Common myeloid progenitor, CD34-positive (primary cell): ENCODE measurements at regions of chr1 and their contacts with region 1.

Region 1: DNA sequence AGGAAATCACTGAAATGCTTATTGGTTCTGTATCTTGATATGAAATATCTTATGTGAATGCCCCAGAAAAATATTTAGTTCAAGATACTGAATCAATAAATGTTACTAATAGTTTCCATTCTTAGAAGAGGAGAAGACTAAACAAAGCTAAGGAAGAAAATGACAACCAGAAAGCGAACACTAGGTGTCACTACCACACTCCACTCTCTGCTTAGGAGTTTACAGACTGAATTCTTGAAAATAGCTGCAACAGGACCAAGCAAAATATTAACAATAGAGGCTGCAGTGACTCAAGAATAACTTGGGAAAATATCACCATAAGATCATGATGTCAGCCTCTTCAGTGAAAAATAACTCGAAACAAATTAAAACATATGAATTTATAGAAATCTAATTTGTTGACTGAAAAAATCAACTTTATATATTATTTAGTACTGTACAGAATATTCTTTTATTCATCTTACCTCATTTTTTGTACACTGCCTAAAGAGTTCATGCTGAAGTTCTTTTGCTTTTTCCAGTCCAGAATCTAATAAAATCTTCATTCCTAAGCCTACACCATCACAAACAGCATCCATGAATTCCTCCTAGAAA is 61.6 kb downstream of the KIF14 start:
- DNase-seq: peak; percentile 44 to 75 (median 64)
- H3K4me3 ChIP-seq: no peak overlapping the region
- H3K27ac ChIP-seq: no peak overlapping the region
- H3K4me1 ChIP-seq: no peaks in the 10 kb centered on the region
- H3K27me3 ChIP-seq: no peaks in the 10 kb centered on the region

Region 2: DNA sequence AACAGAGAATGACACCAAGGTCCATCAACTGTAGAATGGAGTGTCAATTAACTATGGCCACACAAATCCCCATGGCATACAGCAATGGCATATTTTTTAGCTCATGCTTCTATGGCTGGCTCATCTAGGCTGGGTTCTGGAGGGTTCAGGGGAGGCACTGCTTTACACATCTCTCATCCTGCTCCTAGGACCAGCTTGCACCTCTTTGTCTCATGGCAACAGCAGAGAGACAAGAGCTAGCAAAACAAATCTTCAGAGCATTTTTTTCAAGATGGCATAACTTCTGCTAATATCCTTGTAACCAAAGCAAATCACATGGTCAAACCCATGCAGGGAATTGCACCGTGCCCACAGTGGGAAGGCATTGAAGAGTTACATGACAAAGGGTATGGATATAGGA is 20.8 kb before region 1 on chr1:
- CTCF ChIA-PET with region 1: interaction called, 11 read pairs
- POLR2A ChIA-PET with region 1: no interaction called
- DNase-seq: no peak
- H3K4me3 ChIP-seq: no peak overlapping the region
- H3K27ac ChIP-seq: no peak overlapping the region
- H3K4me1 ChIP-seq: no peaks in the 10 kb centered on the region
- H3K27me3 ChIP-seq: no peaks in the 10 kb centered on the region

Region 3: GRCh38 chr1:200837931-200838571 is 279.1 kb after region 1 on chr1:
- CTCF ChIA-PET with region 1: interaction called, 33 read pairs
- POLR2A ChIA-PET with region 1: no interaction called
- DNase-seq: peak; percentile 13 to 30 (median 24)
- H3K4me3 ChIP-seq: no peak overlapping the region
- H3K27ac ChIP-seq: no peak overlapping the region
- H3K4me1 ChIP-seq: no peaks in the 10 kb centered on the region
- H3K27me3 ChIP-seq: no peaks in the 10 kb centered on the region